Calu3 (cell line): ENCODE measurements at regions of chr3 and their contacts with region 1.

Region 1: DNA sequence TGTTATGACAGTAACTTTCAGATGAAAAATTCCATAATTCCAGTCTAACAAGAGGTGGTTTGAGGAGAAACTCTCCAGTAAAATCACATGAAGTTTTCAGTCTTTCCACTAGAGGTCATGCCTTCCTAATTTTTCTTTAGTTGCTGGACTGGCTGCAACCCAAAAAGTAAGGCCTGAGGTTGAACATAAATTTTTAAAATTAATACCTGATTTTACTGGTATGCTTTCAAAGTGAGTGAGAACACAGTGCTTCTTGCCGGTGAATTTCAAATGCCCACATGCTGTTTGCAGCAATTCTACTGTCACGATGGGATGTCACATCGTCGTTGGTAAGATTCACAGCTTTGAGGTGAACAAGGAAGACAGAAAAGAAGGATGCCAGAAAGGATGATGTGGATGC is 89.0 kb upstream of the FGF12 start:
- DNase-seq: peak; percentile 50
- H3K4me3 Mint-ChIP-seq: no peak overlapping the region
- H3K27ac Mint-ChIP-seq: no peak overlapping the region
- H3K4me1 Mint-ChIP-seq: peaks cover 37% of the 10 kb centered on the region
- H3K27me3 Mint-ChIP-seq: no peaks in the 10 kb centered on the region
- CTCF ChIP-seq: peak; percentile 92

Region 2: DNA sequence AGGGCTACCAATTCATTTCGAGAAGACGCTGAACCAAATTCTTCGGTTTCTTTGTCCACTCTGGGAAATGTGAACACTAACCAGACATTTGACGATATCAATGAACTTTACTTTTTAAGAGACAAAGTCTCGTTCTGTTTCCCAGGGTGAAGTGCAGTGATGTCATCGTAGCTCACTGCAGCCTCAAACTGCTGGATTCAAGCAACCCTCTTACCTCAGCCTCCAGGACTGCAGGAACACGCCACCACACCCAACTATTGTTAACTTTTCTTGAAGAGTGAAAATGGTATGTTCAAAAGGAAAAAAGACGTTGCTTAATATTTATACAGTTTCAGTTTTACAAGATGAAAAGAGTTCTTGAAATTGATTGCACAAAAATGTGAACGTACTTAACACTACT is 70.7 kb after region 1 on chr3:
- CTCF ChIA-PET with region 1: interaction called, 4 read pairs
- intact Hi-C with region 1: loop called (anchors 1 kb)
- DNase-seq: peak; percentile 77
- H3K4me3 Mint-ChIP-seq: peak overlapping the region; percentile 60
- H3K27ac Mint-ChIP-seq: peak overlapping the region; percentile 88
- H3K4me1 Mint-ChIP-seq: peaks cover 93% of the 10 kb centered on the region
- H3K27me3 Mint-ChIP-seq: no peaks in the 10 kb centered on the region
- CTCF ChIP-seq: no peak

Region 3: GRCh38 chr3:193040836-193041672 is 224.7 kb after region 1 on chr3:
- CTCF ChIA-PET with region 1: interaction called, 25 read pairs
- intact Hi-C with region 1: loop called (anchors 1 kb)
- DNase-seq: peak; percentile 30
- H3K4me3 Mint-ChIP-seq: no peak overlapping the region
- H3K27ac Mint-ChIP-seq: no peak overlapping the region
- H3K4me1 Mint-ChIP-seq: no peaks in the 10 kb centered on the region
- H3K27me3 Mint-ChIP-seq: no peaks in the 10 kb centered on the region
- CTCF ChIP-seq: peak; percentile 33

Region 4: GRCh38 chr3:193190146-193190786 is 373.9 kb after region 1 on chr3:
- CTCF ChIA-PET with region 1: interaction called, 4 read pairs
- intact Hi-C with region 1: loop called (anchors 2 kb)
- DNase-seq: peak; percentile 76
- H3K4me3 Mint-ChIP-seq: no peak overlapping the region
- H3K27ac Mint-ChIP-seq: no peak overlapping the region
- H3K4me1 Mint-ChIP-seq: no peaks in the 10 kb centered on the region
- H3K27me3 Mint-ChIP-seq: no peaks in the 10 kb centered on the region
- CTCF ChIP-seq: peak; percentile 79

Region 5: DNA sequence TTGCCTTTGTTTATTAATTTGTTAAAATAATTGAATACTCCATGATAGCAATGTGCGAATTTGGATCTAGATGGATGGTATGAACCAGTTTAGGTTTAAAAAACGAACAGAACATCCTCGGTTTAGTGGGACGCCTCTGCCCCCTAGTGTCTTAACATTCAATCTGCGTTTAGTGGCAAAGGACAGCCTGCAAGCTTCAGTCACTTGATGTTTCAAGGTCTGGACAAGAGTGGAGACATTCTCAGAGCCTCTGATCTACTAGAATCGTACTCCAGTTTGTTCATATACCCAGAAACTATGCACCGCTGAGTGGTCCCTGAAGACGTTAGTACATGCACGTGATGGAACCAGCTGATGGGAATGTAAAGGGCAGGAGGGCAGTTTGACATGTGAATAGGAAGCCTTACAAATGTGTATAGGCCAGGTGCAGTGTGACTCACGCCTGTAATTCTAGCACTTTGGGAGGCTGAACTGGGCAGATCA is 756.1 kb after region 1 on chr3:
- CTCF ChIA-PET with region 1: interaction called, 5 read pairs
- intact Hi-C with region 1: loop called (anchors 2 kb)
- DNase-seq: peak; percentile 83
- H3K4me3 Mint-ChIP-seq: no peak overlapping the region
- H3K27ac Mint-ChIP-seq: no peak overlapping the region
- H3K4me1 Mint-ChIP-seq: peaks cover 13% of the 10 kb centered on the region
- H3K27me3 Mint-ChIP-seq: no peaks in the 10 kb centered on the region
- CTCF ChIP-seq: peak; percentile 82